ENCODE measurements at regions of chr1 and their contacts with region 1.

Region 1: GRCh38 chr1:155017041-155017945 is 14.7 kb downstream of the ZBTB7B start:
- DNase-seq: peak; percentile 85 to 93 (median 89)
- ATAC-seq: peak; percentile 98
- H3K4me3 ChIP-seq: peak overlapping the region; percentile 50
- H3K4me3 Mint-ChIP-seq: peak overlapping the region; percentile 51 to 84 (median 70)
- H3K27ac ChIP-seq: peak overlapping the region; percentile 83
- H3K27ac Mint-ChIP-seq: peak overlapping the region; percentile 38 to 98 (median 94)
- H3K4me1 ChIP-seq: peaks cover 38 to 65% of the 10 kb centered on the region in 2 donors
- H3K4me1 Mint-ChIP-seq: peaks cover 38 to 83% (median 71%) of the 10 kb centered on the region in 7 donors
- H3K27me3 ChIP-seq: no peaks in the 10 kb centered on the region
- H3K27me3 Mint-ChIP-seq: no peaks in the 10 kb centered on the region

Region 2: GRCh38 chr1:154669464-154670282 is 347.6 kb before region 1 on chr1:
- CTCF ChIA-PET with region 1: interaction called, 4 read pairs
- POLR2A ChIA-PET with region 1: no interaction called
- intact Hi-C with region 1: loop called in 1 of 2 experiments (anchors 1 kb)
- DNase-seq: peak; percentile 40 to 81 (median 73)
- ATAC-seq: peak; percentile 100
- H3K4me3 ChIP-seq: no peak overlapping the region
- H3K4me3 Mint-ChIP-seq: no peak overlapping the region
- H3K27ac ChIP-seq: no peak overlapping the region
- H3K27ac Mint-ChIP-seq: peak overlapping the region in 1 of 9 donors; percentile 30
- H3K4me1 ChIP-seq: no peaks in the 10 kb centered on the region
- H3K4me1 Mint-ChIP-seq: peaks cover 0 to 13% (median 5%) of the 10 kb centered on the region in 7 donors
- H3K27me3 ChIP-seq: no peaks in the 10 kb centered on the region
- H3K27me3 Mint-ChIP-seq: peaks cover 0 to 4% (median 0%) of the 10 kb centered on the region in 5 donors

Region 3: DNA sequence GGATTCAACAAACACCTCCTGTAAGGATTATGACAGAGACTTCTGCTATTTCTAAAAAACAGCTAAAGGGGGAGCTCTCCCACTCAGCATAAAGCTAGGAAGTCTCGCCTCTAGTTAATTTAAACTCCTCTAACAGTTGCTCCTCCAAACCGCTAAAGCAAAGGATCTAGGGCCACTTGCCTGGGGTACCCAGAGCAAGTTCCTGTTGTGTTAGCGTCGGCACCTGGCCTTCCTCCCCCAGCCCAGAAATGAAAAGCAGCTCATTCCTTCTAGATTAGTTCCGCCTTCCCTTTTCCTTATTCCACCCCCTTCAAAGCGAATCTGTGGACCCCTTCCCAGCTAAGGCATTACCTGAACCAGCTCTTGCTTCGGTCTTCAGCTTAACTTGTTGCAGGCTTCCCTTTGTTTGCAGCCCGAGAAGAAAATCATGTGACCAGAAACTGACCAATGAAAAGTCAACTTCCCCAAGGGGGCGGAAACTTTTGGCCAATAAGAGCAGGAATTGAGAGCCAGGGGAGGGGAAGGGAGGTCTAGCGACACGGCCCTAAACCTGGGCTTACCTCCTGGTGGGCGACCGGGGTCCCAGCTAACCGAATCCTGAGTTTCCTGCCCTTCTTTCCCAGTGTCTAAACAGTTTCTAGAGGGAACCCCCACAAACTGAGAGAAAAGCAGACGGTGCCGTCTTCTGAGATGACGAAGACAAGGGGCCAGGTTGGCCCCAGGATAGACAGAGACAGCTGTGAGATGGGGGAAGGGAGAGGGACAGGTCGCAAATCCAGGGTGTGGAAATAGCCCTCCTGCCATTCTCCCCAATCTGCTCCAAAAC is 61.4 kb before region 1 on chr1 and contains the start of gene PBXIP1:
- CTCF ChIA-PET with region 1: interaction called, 101 read pairs
- POLR2A ChIA-PET with region 1: interaction called, 136 read pairs
- intact Hi-C with region 1: loop called (anchors 1 kb)
- DNase-seq: peak; percentile 56 to 95 (median 92)
- ATAC-seq: peak; percentile 58
- H3K4me3 ChIP-seq: peak within 1 kb of the TSS; percentile 92
- H3K4me3 Mint-ChIP-seq: peak within 1 kb of the TSS; percentile 92 to 99 (median 98)
- H3K27ac ChIP-seq: peak within 1 kb of the TSS; percentile 96
- H3K27ac Mint-ChIP-seq: peak within 1 kb of the TSS; percentile 97 to 100 (median 99)
- H3K4me1 ChIP-seq: peaks cover 53 to 54% of the 10 kb centered on the region in 2 donors
- H3K4me1 Mint-ChIP-seq: peaks cover 59 to 87% (median 76%) of the 10 kb centered on the region in 7 donors
- H3K27me3 ChIP-seq: no peaks in the 10 kb centered on the region
- H3K27me3 Mint-ChIP-seq: no peaks in the 10 kb centered on the region
- total RNA-seq, gene PBXIP1: 107 to 390 (median 383) TPM

Region 4: GRCh38 chr1:154967331-154967950 is 49.9 kb before region 1 on chr1:
- CTCF ChIA-PET with region 1: interaction called, 94 read pairs
- POLR2A ChIA-PET with region 1: interaction called, 44 read pairs
- intact Hi-C with region 1: no loop called
- DNase-seq: no peak
- ATAC-seq: no peak
- H3K4me3 ChIP-seq: no peak overlapping the region
- H3K4me3 Mint-ChIP-seq: no peak overlapping the region
- H3K27ac ChIP-seq: no peak overlapping the region
- H3K27ac Mint-ChIP-seq: peak overlapping the region in 6 of 9 donors; percentile 13 to 58 (median 32)
- H3K4me1 ChIP-seq: peaks cover 13 to 29% of the 10 kb centered on the region in 2 donors
- H3K4me1 Mint-ChIP-seq: peaks cover 26 to 59% (median 42%) of the 10 kb centered on the region in 7 donors
- H3K27me3 ChIP-seq: no peaks in the 10 kb centered on the region
- H3K27me3 Mint-ChIP-seq: no peaks in the 10 kb centered on the region

Region 5: GRCh38 chr1:154982897-154983648 is 34.2 kb before region 1 on chr1 and contains the start of gene FLAD1:
- CTCF ChIA-PET with region 1: interaction called, 94 read pairs
- POLR2A ChIA-PET with region 1: interaction called, 37 read pairs
- intact Hi-C with region 1: loop called (anchors 1 kb)
- DNase-seq: peak; percentile 71 to 98 (median 95)
- ATAC-seq: peak; percentile 99
- H3K4me3 ChIP-seq: peak within 1 kb of the TSS; percentile 64
- H3K4me3 Mint-ChIP-seq: no peak within 1 kb of the TSS
- H3K27ac ChIP-seq: peak within 1 kb of the TSS; percentile 77
- H3K27ac Mint-ChIP-seq: peak within 1 kb of the TSS in 3 of 9 donors; percentile 38 to 55 (median 41)
- H3K4me1 ChIP-seq: peaks cover 12 to 13% of the 10 kb centered on the region in 2 donors
- H3K4me1 Mint-ChIP-seq: peaks cover 0 to 24% (median 4%) of the 10 kb centered on the region in 7 donors
- H3K27me3 ChIP-seq: no peaks in the 10 kb centered on the region
- H3K27me3 Mint-ChIP-seq: no peaks in the 10 kb centered on the region
- total RNA-seq, gene FLAD1: 24.4 to 50.2 (median 50.0) TPM

Region 6: DNA sequence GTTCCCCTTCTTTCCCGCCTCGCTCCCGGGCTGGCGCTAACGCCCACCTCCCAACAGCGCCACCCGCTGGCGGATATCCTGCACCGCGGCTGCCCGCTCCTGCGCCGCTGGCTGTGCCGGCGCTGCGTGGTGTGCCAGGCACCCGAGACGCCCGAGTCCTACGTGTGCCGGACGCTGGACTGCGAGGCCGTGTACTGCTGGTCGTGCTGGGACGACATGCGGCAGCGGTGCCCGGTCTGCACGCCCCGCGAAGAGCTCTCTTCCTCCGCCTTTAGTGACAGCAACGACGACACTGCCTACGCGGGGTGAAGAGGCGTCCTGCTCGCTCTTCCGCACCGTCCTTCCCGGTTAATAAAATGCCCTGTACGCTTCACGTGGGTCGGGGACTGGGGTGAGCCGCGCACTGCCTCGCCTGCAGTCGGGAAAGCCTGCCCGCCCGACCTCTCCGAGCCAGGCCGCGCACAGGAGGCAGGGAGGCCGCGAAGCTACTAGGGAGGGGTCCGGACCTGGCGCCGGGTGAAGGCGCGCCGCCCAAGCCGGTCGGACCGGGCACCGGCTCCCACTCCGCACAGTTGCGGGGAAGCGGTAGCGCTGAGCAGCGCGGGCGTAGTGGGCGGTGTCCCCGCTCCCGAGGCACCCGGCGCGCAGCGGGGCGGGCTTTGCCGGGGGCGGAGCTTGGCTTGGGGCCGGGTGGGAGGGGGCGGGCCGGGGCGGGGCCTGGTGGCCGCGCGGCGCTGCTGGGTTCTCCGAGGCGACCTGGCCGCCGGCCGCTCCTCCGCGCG is 33.5 kb after region 1 on chr1 and contains the start of gene ADAM15:
- CTCF ChIA-PET with region 1: interaction called, 6 read pairs
- POLR2A ChIA-PET with region 1: interaction called, 3 read pairs
- intact Hi-C with region 1: loop called in 1 of 2 experiments (anchors 5 kb)
- DNase-seq: peak; percentile 56 to 88 (median 74)
- ATAC-seq: peak; percentile 90
- H3K4me3 ChIP-seq: peak within 1 kb of the TSS; percentile 66
- H3K4me3 Mint-ChIP-seq: peak within 1 kb of the TSS; percentile 74 to 91 (median 88)
- H3K27ac ChIP-seq: peak within 1 kb of the TSS; percentile 72
- H3K27ac Mint-ChIP-seq: peak within 1 kb of the TSS in 8 of 9 donors; percentile 47 to 85 (median 70)
- H3K4me1 ChIP-seq: peaks cover 5 to 13% of the 10 kb centered on the region in 2 donors
- H3K4me1 Mint-ChIP-seq: peaks cover 14 to 31% (median 23%) of the 10 kb centered on the region in 7 donors
- H3K27me3 ChIP-seq: no peaks in the 10 kb centered on the region
- H3K27me3 Mint-ChIP-seq: no peaks in the 10 kb centered on the region
- total RNA-seq, gene ADAM15: 16.9 to 53.7 (median 28.8) TPM